Ovary (tissue), 10 donors: ENCODE measurements at regions of chr21 and their contacts with region 1.

Region 1: DNA sequence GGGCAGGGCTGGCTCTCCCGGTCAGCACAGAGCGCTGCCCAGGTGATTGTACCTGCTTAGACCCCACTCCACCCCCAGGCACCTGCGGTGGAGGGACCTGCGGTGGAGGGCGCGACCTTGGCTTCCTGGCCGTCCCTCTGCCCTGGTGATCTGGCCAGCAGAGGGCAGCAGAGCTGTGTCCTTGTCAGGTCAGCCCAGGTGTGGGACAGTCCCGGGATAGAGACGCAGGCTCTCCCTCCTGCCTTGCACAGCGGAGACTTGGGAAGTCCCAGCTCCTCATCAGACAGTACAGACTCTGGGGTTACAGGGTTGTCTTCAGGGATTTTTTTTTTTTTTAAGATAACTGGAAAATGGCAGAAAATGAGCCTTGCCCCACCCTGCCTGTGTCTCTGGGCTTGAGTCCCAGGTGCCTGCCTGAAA is 10.0 kb downstream of the SLX9 start:
- DNase-seq: peak; percentile 85 to 92 (median 89)
- H3K4me3 ChIP-seq: no peak overlapping the region
- H3K27ac ChIP-seq: no peak overlapping the region
- H3K4me1 ChIP-seq: no peaks in the 10 kb centered on the region
- H3K27me3 ChIP-seq: no peaks in the 10 kb centered on the region
- CTCF ChIP-seq: peak; percentile 79 to 91 (median 86)
- EP300 ChIP-seq: no peak
- POLR2A ChIP-seq: no peak

Region 2: DNA sequence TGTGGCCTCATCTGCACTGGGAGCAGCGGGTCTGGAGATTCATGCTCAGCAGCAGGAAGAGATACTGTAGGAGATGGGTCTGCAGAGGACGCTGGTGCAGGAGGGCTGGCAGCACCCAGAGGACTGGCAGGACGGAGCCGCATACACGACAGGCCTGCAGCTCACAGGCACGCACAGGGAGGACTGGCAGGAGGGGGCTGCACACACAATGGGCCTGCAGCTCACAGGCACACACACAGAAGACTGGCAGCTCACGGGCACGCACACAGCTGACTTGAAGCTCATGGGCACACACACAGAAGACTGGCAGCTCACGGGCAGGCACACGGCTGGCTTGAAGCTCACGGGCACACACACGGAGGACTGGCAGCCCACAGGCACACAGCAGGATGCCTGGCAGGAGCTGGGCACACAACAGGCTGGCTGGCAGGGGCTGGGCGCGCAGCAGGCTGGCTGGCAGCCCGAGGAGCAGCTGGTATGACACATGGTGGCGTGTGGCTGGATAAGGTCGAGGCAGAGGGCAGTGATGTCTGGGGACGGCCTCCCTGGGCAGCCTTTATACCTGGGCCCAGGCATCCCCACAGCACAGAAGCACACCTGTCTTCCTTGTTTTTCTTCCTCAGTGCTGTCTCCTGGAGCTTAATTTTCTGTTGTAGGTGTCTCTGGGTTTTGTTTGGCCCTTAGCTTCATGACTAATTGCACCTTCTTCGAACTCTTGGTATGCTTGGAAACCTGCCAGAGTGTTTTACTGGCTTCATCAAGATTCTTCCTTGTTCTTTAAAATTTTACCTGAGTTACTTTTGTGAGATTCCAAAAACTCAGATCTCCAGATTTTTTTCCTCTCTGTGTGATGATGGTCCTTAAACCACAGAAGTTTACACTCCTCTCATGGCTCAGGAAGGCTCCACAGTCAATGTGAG is 283.1 kb before region 1 on chr21 and contains the start of gene KRTAP12-2:
- intact Hi-C with region 1: no loop called
- DNase-seq: no peak
- H3K4me3 ChIP-seq: no peak within 1 kb of the TSS
- H3K27ac ChIP-seq: no peak within 1 kb of the TSS
- H3K4me1 ChIP-seq: no peaks in the 10 kb centered on the region
- H3K27me3 ChIP-seq: no peaks in the 10 kb centered on the region
- CTCF ChIP-seq: no peak
- EP300 ChIP-seq: no peak
- POLR2A ChIP-seq: no peak
- total RNA-seq, gene KRTAP12-2: not detected

Region 3: GRCh38 chr21:44785620-44786335 is 164.0 kb before region 1 on chr21:
- intact Hi-C with region 1: no loop called
- DNase-seq: no peak
- H3K4me3 ChIP-seq: no peak overlapping the region
- H3K27ac ChIP-seq: no peak overlapping the region
- H3K4me1 ChIP-seq: no peaks in the 10 kb centered on the region
- H3K27me3 ChIP-seq: no peaks in the 10 kb centered on the region
- CTCF ChIP-seq: no peak
- EP300 ChIP-seq: no peak
- POLR2A ChIP-seq: no peak

Region 4: GRCh38 chr21:45033791-45034555 is 84.2 kb after region 1 on chr21:
- intact Hi-C with region 1: loop called in 1 of 4 experiments (anchors 10 kb)
- DNase-seq: peak in 2 of 5 donors; percentile 22 to 49
- H3K4me3 ChIP-seq: no peak overlapping the region
- H3K27ac ChIP-seq: peak overlapping the region in 1 of 2 donors; percentile 26
- H3K4me1 ChIP-seq: peaks cover 20% of the 10 kb centered on the region
- H3K27me3 ChIP-seq: no peaks in the 10 kb centered on the region
- CTCF ChIP-seq: no peak
- EP300 ChIP-seq: no peak
- POLR2A ChIP-seq: no peak

Region 5: GRCh38 chr21:45277101-45278045 is 327.6 kb after region 1 on chr21:
- intact Hi-C with region 1: loop called in 2 of 4 experiments (anchors 5 to 10 kb)
- DNase-seq: peak; percentile 8 to 41 (median 22)
- H3K4me3 ChIP-seq: no peak overlapping the region
- H3K27ac ChIP-seq: no peak overlapping the region
- H3K4me1 ChIP-seq: no peaks in the 10 kb centered on the region
- H3K27me3 ChIP-seq: no peaks in the 10 kb centered on the region
- CTCF ChIP-seq: no peak
- EP300 ChIP-seq: no peak
- POLR2A ChIP-seq: no peak